Activated naive CD4-positive, alpha-beta T cell treated with anti-CD3 and anti-CD28 coated beads, Interleukin-2, amount 10 ng/mL, durations not matched to agents 7 days and 5 days (primary cell): ENCODE measurements at regions of chr5 and their contacts with region 1.

Region 1: DNA sequence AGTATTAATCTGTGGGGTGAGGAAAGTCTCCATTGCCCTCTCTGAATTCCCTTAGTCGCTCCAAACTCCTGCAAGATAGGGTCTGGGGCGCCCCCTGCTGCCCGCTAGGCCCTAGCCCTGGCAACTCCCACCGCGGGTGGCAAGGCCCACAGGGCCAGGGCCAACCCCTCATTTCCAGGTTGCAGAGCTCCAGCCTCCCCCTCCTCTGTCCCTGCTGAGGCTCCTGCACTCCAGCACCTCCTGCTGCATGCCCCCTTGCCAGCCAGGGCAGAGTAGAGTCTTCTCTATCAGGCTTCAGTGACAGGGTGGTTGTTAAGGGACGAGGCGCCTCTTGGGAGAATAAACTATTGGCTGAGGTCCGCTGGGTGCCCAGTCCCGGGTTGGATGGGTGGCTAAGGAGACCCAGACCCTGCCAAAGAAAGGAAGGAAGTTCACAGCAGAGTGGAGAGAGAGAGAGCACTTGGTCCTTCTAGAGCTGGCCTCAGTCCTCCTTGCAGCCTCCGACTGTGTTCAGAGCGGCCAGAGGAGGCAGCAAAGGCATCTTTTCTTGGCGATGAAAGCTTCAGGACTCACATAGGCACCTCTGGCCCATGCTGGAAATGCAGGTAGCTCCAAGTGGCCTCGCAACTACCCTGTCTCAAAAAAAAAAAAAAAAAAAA is 45.6 kb downstream of the SAR1B start:
- DNase-seq: peak; percentile 90
- H3K4me3 Mint-ChIP-seq: no peak overlapping the region
- H3K27ac Mint-ChIP-seq: no peak overlapping the region
- H3K4me1 Mint-ChIP-seq: peaks cover 9% of the 10 kb centered on the region
- H3K27me3 Mint-ChIP-seq: no peaks in the 10 kb centered on the region

Region 2: DNA sequence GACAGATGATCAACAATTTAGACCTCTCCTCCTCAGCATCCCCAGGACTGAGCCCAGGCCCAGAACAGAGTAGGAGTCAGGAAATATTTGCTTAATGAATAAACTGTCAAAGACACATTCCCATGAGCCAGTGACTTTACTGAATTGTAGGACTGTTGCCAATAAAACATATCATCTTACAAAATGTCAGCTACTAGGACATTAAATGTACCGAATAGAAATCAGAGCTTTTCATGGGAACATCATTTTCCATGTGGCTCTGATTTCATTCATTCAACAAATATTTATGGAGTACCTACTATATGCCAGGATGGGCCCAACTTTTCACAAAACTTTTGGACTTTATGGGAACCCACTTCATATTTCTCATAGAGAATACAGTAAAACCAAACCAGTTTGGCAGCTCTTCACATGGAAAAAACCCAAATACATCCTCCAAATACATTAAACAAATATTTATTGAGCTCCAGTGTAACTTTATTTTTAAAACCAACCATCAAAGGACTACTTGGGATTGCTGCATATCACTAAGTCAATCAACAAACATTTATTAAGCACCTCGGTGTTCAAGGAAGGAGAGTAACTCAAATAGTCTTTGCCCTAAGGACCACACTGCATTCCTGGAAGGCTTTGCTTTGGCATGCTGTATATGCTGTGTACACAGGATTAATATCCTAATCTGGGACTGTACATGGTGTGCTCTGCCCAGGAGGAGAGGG is 593.6 kb before region 1 on chr5:
- CTCF ChIA-PET with region 1: no interaction called
- DNase-seq: no peak
- H3K4me3 Mint-ChIP-seq: no peak overlapping the region
- H3K27ac Mint-ChIP-seq: no peak overlapping the region
- H3K4me1 Mint-ChIP-seq: peaks cover 36% of the 10 kb centered on the region
- H3K27me3 Mint-ChIP-seq: no peaks in the 10 kb centered on the region

Region 3: GRCh38 chr5:134296213-134296612 is 290.8 kb before region 1 on chr5:
- CTCF ChIA-PET with region 1: interaction called, 14 read pairs
- DNase-seq: no peak
- H3K4me3 Mint-ChIP-seq: no peak overlapping the region
- H3K27ac Mint-ChIP-seq: no peak overlapping the region
- H3K4me1 Mint-ChIP-seq: no peaks in the 10 kb centered on the region
- H3K27me3 Mint-ChIP-seq: peaks cover 17% of the 10 kb centered on the region

Region 4: DNA sequence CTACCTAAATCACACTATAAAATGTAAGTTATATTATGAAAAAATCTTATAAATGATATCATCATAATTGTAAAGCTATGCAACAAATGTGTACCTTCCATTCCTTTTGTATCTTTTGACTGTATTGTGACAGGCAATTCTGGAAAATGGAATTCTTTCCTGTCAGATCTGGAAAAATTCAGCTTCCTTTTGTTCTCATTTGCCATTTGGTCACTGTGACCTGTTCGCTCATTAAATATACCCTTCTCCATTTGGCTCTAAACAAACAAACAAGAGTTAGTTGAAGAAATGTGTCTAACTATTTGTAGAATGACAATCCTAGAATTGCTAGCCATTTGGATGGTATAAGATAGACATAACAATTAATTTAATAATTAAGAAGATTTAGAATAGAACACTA is 282.7 kb before region 1 on chr5:
- CTCF ChIA-PET with region 1: interaction called, 34 read pairs
- DNase-seq: no peak
- H3K4me3 Mint-ChIP-seq: no peak overlapping the region
- H3K27ac Mint-ChIP-seq: no peak overlapping the region
- H3K4me1 Mint-ChIP-seq: peaks cover 8% of the 10 kb centered on the region
- H3K27me3 Mint-ChIP-seq: no peaks in the 10 kb centered on the region

Region 5: GRCh38 chr5:134370871-134371833 is 215.8 kb before region 1 on chr5 and contains the start of gene UBE2B:
- CTCF ChIA-PET with region 1: interaction called, 10 read pairs
- DNase-seq: peak; percentile 99
- H3K4me3 Mint-ChIP-seq: peak within 1 kb of the TSS; percentile 99
- H3K27ac Mint-ChIP-seq: peak within 1 kb of the TSS; percentile 99
- H3K4me1 Mint-ChIP-seq: peaks cover 49% of the 10 kb centered on the region
- H3K27me3 Mint-ChIP-seq: peaks cover 17% of the 10 kb centered on the region

Region 6: GRCh38 chr5:134417707-134418106 is 169.3 kb before region 1 on chr5:
- CTCF ChIA-PET with region 1: interaction called, 10 read pairs
- DNase-seq: no peak
- H3K4me3 Mint-ChIP-seq: no peak overlapping the region
- H3K27ac Mint-ChIP-seq: no peak overlapping the region
- H3K4me1 Mint-ChIP-seq: peaks cover 2% of the 10 kb centered on the region
- H3K27me3 Mint-ChIP-seq: peaks cover 10% of the 10 kb centered on the region

Region 7: GRCh38 chr5:134609232-134609851 is 22.3 kb after region 1 on chr5:
- CTCF ChIA-PET with region 1: interaction called, 80 read pairs
- DNase-seq: no peak
- H3K4me3 Mint-ChIP-seq: no peak overlapping the region
- H3K27ac Mint-ChIP-seq: peak overlapping the region; percentile 92
- H3K4me1 Mint-ChIP-seq: peaks cover 44% of the 10 kb centered on the region
- H3K27me3 Mint-ChIP-seq: no peaks in the 10 kb centered on the region

Region 8: DNA sequence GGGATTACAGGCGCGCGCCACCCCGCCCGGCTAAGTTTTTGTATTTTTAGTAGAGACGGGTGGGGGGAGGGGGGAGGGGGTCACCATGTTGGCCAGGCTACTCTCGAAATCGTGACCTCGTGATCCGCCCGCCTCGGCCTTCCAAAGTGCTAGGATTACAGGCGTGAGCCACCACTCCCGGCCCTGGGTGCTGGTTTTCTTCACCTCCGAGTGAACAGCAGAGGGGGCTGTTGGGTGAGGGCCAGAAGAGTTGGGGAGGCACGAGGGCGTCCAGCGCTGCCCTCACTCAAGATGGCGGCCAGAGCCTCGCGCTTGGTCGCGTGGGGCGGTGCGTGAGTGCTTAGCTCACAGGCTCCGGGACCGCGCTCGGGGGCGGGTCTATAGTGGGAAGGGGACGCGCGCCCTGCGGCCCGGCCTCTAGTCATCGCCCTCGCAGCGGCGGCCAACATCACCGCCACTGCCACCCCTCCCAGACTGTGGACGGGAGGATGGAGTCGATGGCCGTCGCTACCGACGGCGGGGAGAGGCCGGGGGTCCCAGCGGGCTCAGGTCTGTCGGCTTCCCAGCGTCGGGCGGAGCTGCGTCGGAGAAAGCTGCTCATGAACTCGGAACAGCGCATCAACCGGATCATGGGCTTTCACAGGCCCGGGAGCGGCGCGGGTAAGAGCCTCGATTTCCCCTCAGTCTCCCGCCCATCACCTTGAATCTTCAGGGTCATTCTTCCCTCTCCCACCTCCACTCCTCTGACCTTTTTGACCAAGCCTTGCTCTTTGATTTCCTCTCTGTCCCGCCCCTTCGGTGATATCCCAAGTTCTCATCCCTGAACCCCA is 151.4 kb after region 1 on chr5 and contains the start of gene CAMLG:
- CTCF ChIA-PET with region 1: interaction called, 12 read pairs
- DNase-seq: peak; percentile 98
- H3K4me3 Mint-ChIP-seq: peak within 1 kb of the TSS; percentile 85
- H3K27ac Mint-ChIP-seq: peak within 1 kb of the TSS; percentile 86
- H3K4me1 Mint-ChIP-seq: peaks cover 42% of the 10 kb centered on the region
- H3K27me3 Mint-ChIP-seq: no peaks in the 10 kb centered on the region